CD8-positive, alpha-beta T cell (primary cell): ENCODE measurements at regions of chr14 and their contacts with region 1.

Region 1: DNA sequence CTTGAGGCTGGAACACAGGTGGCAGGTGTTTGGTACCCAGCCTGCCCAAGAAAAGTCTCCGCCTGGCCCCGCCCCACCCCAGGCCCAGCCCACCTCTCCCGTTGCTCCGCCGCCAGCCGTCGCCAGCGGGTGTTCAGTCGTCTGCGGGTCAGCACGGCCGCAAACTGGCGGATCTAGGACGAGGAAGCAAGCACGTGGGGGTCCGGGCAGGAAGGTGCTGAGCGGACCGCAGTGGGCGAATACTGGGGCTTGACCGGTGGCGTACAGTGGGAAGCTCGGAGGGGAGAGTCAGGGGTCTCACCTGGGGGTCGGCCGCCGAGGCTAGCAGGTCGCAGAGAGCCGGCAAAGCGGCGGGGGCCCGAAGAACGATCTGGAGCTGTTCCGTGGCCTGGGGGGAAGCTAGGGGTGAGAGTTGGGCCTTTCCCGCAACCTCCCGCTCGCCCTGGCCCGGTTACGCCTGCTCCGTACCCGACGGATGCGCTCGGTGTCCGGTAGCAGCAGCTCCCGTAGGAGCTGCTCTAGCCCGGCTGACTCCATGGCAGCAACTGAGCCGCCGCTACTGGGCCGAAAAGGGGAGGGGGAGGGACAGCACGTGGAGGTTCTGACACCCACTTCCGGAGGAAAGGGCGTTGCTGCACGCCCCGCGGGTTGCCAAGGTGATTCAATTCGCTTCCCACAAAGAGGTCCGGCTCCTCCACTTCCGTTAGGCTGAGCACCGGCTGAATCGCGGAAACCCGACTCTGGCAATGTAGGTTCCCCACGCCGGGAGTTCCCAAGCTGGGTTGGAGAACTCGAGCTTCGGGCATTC is at the start of gene IPO4:
- DNase-seq: peak; percentile 86 to 99 (median 94)
- ATAC-seq: peak; percentile 91
- H3K4me3 ChIP-seq: peak within 1 kb of the TSS; percentile 77 to 82
- H3K4me3 Mint-ChIP-seq: peak within 1 kb of the TSS; percentile 89
- H3K27ac ChIP-seq: peak within 1 kb of the TSS; percentile 61 to 89
- H3K27ac Mint-ChIP-seq: peak within 1 kb of the TSS; percentile 87
- H3K4me1 ChIP-seq: peaks cover 17% of the 10 kb centered on the region
- H3K4me1 Mint-ChIP-seq: peaks cover 38% of the 10 kb centered on the region
- H3K27me3 ChIP-seq: no peaks in the 10 kb centered on the region
- H3K27me3 Mint-ChIP-seq: no peaks in the 10 kb centered on the region
- CTCF ChIP-seq: no peak
- total RNA-seq, gene IPO4: 69.2 to 75.6 TPM

Region 2: GRCh38 chr14:23942387-23942986 is 246.0 kb before region 1 on chr14:
- CTCF ChIA-PET with region 1: no interaction called
- POLR2A ChIA-PET with region 1: no interaction called
- intact Hi-C with region 1: no loop called
- DNase-seq: no peak
- ATAC-seq: no peak
- H3K4me3 ChIP-seq: no peak overlapping the region
- H3K4me3 Mint-ChIP-seq: no peak overlapping the region
- H3K27ac ChIP-seq: no peak overlapping the region
- H3K27ac Mint-ChIP-seq: no peak overlapping the region
- H3K4me1 ChIP-seq: no peaks in the 10 kb centered on the region
- H3K4me1 Mint-ChIP-seq: peaks cover 23% of the 10 kb centered on the region
- H3K27me3 ChIP-seq: no peaks in the 10 kb centered on the region
- H3K27me3 Mint-ChIP-seq: no peaks in the 10 kb centered on the region
- CTCF ChIP-seq: no peak

Region 3: DNA sequence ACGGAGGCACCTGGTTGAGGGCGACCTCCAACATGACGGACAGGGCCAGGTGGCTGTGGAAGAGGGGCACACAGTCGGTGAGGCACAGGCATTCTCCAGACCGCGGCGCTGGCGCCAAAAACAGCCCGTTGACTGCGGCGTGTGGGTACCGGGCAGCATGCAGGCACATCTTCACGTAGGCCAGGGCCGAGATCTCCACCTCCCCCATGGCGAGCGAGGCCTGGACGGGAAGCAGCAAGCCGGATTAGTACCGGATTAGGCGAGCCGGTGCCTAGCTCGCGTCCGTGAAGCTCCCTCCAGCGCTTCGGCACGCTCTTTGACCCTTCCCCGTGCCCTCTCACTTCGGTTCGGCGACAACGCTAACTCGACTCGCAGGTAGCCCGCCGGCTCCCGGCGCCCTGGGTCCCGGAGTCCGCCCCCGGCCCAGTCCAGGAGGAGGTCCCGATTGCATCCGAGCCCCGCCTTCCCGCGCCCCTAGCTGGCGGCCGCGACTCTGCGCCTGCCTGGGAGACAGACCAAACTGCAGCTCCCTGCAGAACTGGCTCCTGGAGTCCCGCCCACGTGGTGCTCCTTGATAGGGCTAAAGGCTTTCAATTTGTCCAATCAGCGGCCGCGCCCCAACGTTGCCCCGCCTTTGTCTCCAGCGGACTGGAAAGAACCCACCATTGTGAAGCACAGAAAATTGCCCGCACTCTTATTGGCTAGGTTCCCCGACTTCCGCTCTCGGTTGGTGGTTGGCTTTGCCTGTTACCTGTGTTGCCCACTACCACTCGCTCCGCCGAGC is 47.2 kb before region 1 on chr14 and contains the start of gene EMC9:
- CTCF ChIA-PET with region 1: no interaction called
- POLR2A ChIA-PET with region 1: interaction called, 7 read pairs
- intact Hi-C with region 1: loop called (anchors 1 to 2 kb)
- DNase-seq: peak; percentile 98 to 100 (median 99)
- ATAC-seq: peak; percentile 90
- H3K4me3 ChIP-seq: peak within 1 kb of the TSS; percentile 81 to 89
- H3K4me3 Mint-ChIP-seq: peak within 1 kb of the TSS; percentile 86
- H3K27ac ChIP-seq: peak within 1 kb of the TSS; percentile 49 to 74
- H3K27ac Mint-ChIP-seq: peak within 1 kb of the TSS; percentile 84
- H3K4me1 ChIP-seq: peaks cover 51% of the 10 kb centered on the region
- H3K4me1 Mint-ChIP-seq: peaks cover 73% of the 10 kb centered on the region
- H3K27me3 ChIP-seq: no peaks in the 10 kb centered on the region
- H3K27me3 Mint-ChIP-seq: no peaks in the 10 kb centered on the region
- CTCF ChIP-seq: no peak
- total RNA-seq, gene EMC9: 7.8 to 10.4 TPM

Region 4: GRCh38 chr14:24171422-24172260 is 16.8 kb before region 1 on chr14 and contains the start of gene REC8:
- CTCF ChIA-PET with region 1: interaction called, 4 read pairs
- POLR2A ChIA-PET with region 1: interaction called, 5 read pairs
- intact Hi-C with region 1: loop called in 1 of 2 experiments (anchors 1 kb)
- DNase-seq: peak; percentile 62 to 92 (median 81)
- ATAC-seq: peak; percentile 87
- H3K4me3 ChIP-seq: peak within 1 kb of the TSS; percentile 53 to 60
- H3K4me3 Mint-ChIP-seq: peak within 1 kb of the TSS; percentile 88
- H3K27ac ChIP-seq: peak within 1 kb of the TSS; percentile 17 to 64
- H3K27ac Mint-ChIP-seq: peak within 1 kb of the TSS; percentile 84
- H3K4me1 ChIP-seq: peaks cover 15% of the 10 kb centered on the region
- H3K4me1 Mint-ChIP-seq: peaks cover 26% of the 10 kb centered on the region
- H3K27me3 ChIP-seq: no peaks in the 10 kb centered on the region
- H3K27me3 Mint-ChIP-seq: no peaks in the 10 kb centered on the region
- CTCF ChIP-seq: no peak
- total RNA-seq, gene REC8: 131 to 144 TPM